ENCODE measurements at regions of chr11 and their contacts with region 1.

Region 1: GRCh38 chr11:44936525-44936924 is 14.2 kb downstream of the TP53I11 start:
- DNase-seq: peak; percentile 79
- H3K4me3 ChIP-seq: no peak overlapping the region
- H3K27ac ChIP-seq: no peak overlapping the region
- H3K4me1 ChIP-seq: no peaks in the 10 kb centered on the region
- H3K27me3 ChIP-seq: no peaks in the 10 kb centered on the region
- CTCF ChIP-seq: peak; percentile 93 to 98 (median 96)
- POLR2A ChIP-seq: no peak

Region 2: GRCh38 chr11:45073685-45074141 is 137.2 kb after region 1 on chr11:
- intact Hi-C with region 1: no loop called
- DNase-seq: no peak
- H3K4me3 ChIP-seq: no peak overlapping the region
- H3K27ac ChIP-seq: no peak overlapping the region
- H3K4me1 ChIP-seq: no peaks in the 10 kb centered on the region
- H3K27me3 ChIP-seq: no peaks in the 10 kb centered on the region
- CTCF ChIP-seq: no peak
- POLR2A ChIP-seq: no peak

Region 3: GRCh38 chr11:45105233-45105983 is 168.9 kb after region 1 on chr11:
- intact Hi-C with region 1: loop called (anchors 1 kb)
- DNase-seq: peak; percentile 63
- H3K4me3 ChIP-seq: no peak overlapping the region
- H3K27ac ChIP-seq: no peak overlapping the region
- H3K4me1 ChIP-seq: no peaks in the 10 kb centered on the region
- H3K27me3 ChIP-seq: peaks cover 4% of the 10 kb centered on the region
- CTCF ChIP-seq: peak; percentile 83 to 95 (median 90)
- POLR2A ChIP-seq: no peak

Region 4: GRCh38 chr11:45298718-45299117 is 362.2 kb after region 1 on chr11:
- intact Hi-C with region 1: loop called (anchors 10 kb)
- DNase-seq: no peak
- H3K4me3 ChIP-seq: no peak overlapping the region
- H3K27ac ChIP-seq: no peak overlapping the region
- H3K4me1 ChIP-seq: no peaks in the 10 kb centered on the region
- H3K27me3 ChIP-seq: no peaks in the 10 kb centered on the region
- CTCF ChIP-seq: no peak
- POLR2A ChIP-seq: no peak

Region 5: GRCh38 chr11:45339729-45340519 is 403.4 kb after region 1 on chr11:
- intact Hi-C with region 1: loop called (anchors 10 kb)
- DNase-seq: peak; percentile 94
- H3K4me3 ChIP-seq: peak overlapping the region in 1 of 2 donors; percentile 7
- H3K27ac ChIP-seq: no peak overlapping the region
- H3K4me1 ChIP-seq: peaks cover 2% of the 10 kb centered on the region
- H3K27me3 ChIP-seq: no peaks in the 10 kb centered on the region
- CTCF ChIP-seq: peak; percentile 81 to 95 (median 92)
- POLR2A ChIP-seq: no peak